PC-3 (cell line): ENCODE measurements at regions of chr10 and their contacts with region 1.

Region 1: DNA sequence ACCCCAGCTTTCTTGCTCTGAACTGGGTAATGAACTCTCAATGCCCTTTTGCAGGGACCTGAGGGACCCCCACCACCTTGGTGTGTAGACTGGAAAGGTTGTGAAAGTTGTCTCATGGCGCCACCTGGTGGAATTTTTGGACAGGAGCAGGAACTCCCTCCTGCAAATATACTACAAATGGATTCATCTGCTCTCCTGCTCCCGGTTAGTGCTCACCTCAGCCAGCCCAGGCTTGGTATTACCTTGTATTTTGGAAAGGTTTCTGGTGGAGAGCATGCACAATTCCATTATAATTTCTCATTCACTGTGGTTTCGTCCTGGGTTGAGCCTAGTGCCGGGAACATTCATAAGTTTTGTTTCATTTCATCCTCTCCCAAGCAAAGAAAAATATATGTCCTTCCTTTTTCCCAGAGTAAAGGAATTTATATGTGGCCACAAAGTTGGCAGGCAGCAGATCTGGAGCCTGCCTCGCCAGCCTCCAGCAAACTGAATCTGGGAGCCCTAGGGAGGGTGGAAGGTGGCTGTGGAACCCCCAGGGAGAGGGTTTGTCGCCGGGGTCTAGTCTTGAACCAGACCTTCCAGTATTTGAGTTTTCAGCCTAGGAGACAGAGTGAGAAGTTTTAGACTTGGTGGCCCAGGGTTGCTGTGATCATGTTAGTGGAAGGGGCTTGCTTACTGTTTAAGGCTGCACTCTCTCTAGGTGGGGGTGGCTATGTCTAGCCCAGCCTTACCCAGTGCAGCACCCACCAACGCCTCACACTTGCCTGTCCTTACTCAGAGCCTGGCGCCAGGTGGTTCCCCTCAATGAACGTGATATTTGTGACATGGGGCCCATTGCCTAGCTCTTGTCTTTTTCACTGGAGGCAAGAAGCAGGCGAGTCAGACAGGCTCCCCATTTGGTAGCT is 9.5 kb downstream of the FAM241B start:
- DNase-seq: peak; percentile 87
- ATAC-seq: peak; percentile 67
- H3K4me3 ChIP-seq: no peak overlapping the region
- H3K27ac ChIP-seq: no peak overlapping the region
- H3K4me1 ChIP-seq: peaks cover 10% of the 10 kb centered on the region
- H3K27me3 ChIP-seq: no peaks in the 10 kb centered on the region
- CTCF ChIP-seq: peak; percentile 100

Region 2: DNA sequence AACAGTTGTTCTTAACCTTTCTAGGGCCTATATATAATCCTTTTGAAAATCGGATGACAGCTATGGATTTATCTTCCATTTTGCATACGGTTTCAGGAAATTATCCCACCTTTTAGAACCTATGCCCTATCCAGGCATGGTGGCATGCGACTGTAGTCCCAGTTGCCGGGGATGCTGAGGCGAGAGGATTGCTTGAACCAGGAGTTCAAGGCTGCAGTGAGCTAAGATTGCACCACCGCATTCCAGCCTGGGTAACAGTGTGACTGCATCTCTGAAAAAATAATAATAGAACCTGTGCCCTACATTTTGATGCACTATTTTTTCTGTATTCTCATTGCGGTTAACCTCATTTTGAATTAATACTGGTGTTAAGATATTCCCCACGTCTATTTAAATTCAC is 906.9 kb before region 1 on chr10:
- CTCF ChIA-PET with region 1: no interaction called
- POLR2A ChIA-PET with region 1: no interaction called
- intact Hi-C with region 1: no loop called
- DNase-seq: no peak
- ATAC-seq: no peak
- H3K4me3 ChIP-seq: no peak overlapping the region
- H3K27ac ChIP-seq: no peak overlapping the region
- H3K4me1 ChIP-seq: no peaks in the 10 kb centered on the region
- H3K27me3 ChIP-seq: no peaks in the 10 kb centered on the region
- CTCF ChIP-seq: no peak

Region 3: GRCh38 chr10:69237528-69238159 is 401.9 kb before region 1 on chr10:
- CTCF ChIA-PET with region 1: interaction called, 4 read pairs
- POLR2A ChIA-PET with region 1: no interaction called
- intact Hi-C with region 1: loop called (anchors 5 kb)
- DNase-seq: peak; percentile 98
- ATAC-seq: peak; percentile 94
- H3K4me3 ChIP-seq: no peak overlapping the region
- H3K27ac ChIP-seq: no peak overlapping the region
- H3K4me1 ChIP-seq: peaks cover 31% of the 10 kb centered on the region
- H3K27me3 ChIP-seq: no peaks in the 10 kb centered on the region
- CTCF ChIP-seq: peak; percentile 99

Region 4: DNA sequence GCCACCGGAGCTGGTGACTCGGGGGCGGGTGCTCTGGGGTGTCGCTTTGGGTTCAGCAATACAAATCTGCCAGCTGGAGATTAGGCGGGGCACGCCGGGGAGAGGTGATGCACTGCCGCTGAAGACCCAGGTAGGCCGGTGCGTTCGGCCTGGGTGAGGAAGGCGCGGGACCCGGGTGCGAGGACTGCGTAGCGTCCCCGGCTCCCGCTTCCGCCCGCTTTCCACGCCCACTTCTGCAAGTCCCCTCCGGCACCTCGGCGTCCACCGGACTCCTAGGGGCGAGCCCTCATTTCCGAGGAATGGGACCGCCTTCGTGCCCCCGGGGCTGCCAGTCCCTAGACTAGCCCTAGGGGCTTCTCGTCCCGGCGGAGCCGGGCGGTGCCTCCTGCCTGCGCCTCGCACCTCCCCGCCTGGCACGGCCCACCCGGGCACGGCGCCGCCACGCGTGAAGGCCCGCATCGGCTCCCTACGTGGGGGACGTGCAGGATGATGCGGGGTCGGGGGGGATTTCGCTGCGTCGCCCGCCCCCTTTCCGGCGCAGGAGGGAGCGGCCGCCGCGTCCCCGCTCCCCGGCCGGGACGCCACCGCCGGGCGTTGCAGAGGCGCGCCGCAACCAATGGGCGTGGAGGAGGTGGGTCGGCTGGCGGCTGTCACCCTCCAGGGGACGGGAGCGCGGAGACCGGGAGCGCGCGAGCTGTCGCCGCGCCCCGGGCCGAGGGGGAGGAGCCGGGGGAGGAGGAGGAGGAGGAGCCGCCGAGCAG is 321.3 kb before region 1 on chr10:
- CTCF ChIA-PET with region 1: no interaction called
- POLR2A ChIA-PET with region 1: no interaction called
- intact Hi-C with region 1: no loop called
- DNase-seq: peak; percentile 98
- ATAC-seq: peak; percentile 85
- H3K4me3 ChIP-seq: peak overlapping the region; percentile 89
- H3K27ac ChIP-seq: peak overlapping the region; percentile 21
- H3K4me1 ChIP-seq: peaks cover 39% of the 10 kb centered on the region
- H3K27me3 ChIP-seq: no peaks in the 10 kb centered on the region
- CTCF ChIP-seq: no peak

Region 5: DNA sequence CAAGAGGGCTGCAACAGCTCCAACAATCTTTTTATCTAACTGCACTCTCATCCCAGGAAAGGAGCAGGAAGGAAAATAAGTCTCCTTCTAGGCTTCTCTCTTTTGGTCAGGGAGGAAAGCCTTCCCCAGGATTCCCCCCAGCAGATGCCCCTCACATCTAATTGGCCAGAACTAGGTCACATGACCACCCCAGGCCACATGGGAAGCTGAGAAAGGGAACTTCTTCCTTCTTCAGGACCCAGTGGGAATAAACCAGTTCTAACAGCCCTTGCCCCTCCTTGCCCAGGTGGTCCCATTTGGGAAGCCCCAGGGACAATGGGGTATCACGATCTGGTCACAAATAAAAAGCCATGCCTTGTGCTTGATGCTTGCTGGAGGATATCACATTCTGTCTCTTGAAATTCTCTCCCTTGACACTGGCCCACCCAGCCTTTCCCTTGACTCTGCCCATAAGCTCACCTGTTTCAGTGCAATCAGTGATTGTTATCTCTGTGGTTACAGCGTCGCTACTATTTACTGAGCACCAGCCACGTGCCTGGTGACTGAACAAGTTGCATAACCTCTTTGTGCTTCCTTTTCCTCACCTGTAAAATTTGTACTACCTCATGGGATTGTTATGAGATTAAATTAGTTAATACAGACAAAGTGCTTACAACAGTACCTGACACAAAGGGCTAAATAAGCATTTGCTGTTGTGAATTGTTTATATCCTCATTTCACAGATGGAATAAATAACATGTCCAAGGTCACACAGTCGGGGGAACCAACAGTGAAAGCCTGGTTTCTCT is 213.8 kb before region 1 on chr10:
- CTCF ChIA-PET with region 1: interaction called, 6 read pairs
- POLR2A ChIA-PET with region 1: interaction called, 7 read pairs
- intact Hi-C with region 1: loop called (anchors 1 kb)
- DNase-seq: peak; percentile 89
- ATAC-seq: peak; percentile 52; the same call in 1 of the 2 replicates
- H3K4me3 ChIP-seq: no peak overlapping the region
- H3K27ac ChIP-seq: 0 out of 2 replicates have a peak overlapping the region, but pooled peaks have one; percentile 1
- H3K4me1 ChIP-seq: peaks cover 19% of the 10 kb centered on the region
- H3K27me3 ChIP-seq: no peaks in the 10 kb centered on the region
- CTCF ChIP-seq: no peak

Region 6: DNA sequence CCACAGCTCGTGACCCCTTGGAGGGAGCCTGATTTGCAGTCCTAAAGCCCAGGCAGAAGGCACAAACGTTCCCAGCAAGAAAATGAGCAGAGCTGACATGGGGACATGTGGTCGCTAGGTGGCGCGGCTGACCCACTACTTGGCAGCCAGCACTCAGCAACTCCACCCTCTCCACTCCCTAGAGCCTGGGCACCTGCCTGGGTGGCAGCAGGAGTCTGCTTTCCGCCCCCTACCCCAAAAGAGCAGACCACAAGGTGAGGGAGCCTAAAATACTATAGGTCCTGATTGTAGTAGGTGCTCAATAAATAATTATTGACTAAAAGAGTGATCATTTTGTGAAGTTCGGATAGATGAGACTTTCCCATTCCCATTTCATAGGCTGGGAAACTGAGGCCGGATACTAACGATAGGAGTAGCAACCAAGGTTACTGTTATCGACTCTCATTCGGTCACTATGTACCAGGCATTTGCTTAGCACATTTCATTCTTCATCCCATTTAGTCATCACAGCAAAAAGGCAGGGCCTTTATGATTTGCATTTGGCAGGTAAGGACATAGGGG is 123.8 kb before region 1 on chr10:
- CTCF ChIA-PET with region 1: interaction called, 45 read pairs
- POLR2A ChIA-PET with region 1: interaction called, 6 read pairs
- intact Hi-C with region 1: loop called (anchors 1 kb)
- DNase-seq: peak; percentile 92
- ATAC-seq: peak; percentile 96
- H3K4me3 ChIP-seq: no peak overlapping the region
- H3K27ac ChIP-seq: no peak overlapping the region
- H3K4me1 ChIP-seq: no peaks in the 10 kb centered on the region
- H3K27me3 ChIP-seq: no peaks in the 10 kb centered on the region
- CTCF ChIP-seq: peak; percentile 98

Region 7: GRCh38 chr10:69567920-69568319 is 71.6 kb before region 1 on chr10:
- CTCF ChIA-PET with region 1: no interaction called
- POLR2A ChIA-PET with region 1: no interaction called
- intact Hi-C with region 1: no loop called
- DNase-seq: peak; percentile 81
- ATAC-seq: peak; percentile 91
- H3K4me3 ChIP-seq: no peak overlapping the region
- H3K27ac ChIP-seq: no peak overlapping the region
- H3K4me1 ChIP-seq: no peaks in the 10 kb centered on the region
- H3K27me3 ChIP-seq: peaks cover 85% of the 10 kb centered on the region
- CTCF ChIP-seq: no peak